ENCODE measurements at regions of chr9 and their contacts with region 1.

Region 1: DNA sequence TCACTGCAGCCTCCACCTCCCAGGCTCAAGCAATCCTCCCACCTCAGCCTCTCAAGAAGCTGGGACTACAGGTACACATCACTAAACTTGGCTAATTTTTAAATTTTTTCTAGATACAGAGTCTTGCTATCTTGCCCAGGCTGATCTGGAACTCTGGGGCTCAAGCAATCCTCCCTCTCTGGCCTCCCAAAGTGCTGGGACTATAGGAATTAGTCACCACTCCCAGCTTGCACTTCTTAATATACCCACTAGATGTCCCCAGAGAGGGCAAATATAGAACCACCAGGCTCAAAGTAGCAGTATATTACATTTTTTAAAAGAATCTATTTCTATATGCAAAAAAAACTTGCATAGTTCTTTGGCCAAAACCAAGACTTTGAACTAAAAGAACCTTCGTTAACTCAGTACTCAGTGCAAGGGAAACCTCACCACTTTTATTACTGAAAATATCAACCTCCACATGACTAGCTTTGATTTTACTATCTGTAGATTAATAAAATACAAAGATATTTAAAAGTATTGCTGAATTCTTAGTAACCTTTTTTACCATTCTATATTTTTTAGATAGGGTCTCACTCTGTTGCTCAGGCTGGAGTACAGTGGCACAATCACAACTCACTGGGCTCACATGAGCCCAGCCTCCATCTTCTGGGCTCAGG is 25.8 kb upstream of the HSD17B3 start:
- DNase-seq: peak in 12 of 14 experiments; percentile 5 to 75 (median 17)
- ATAC-seq: peak; percentile 76
- H3K4me3 ChIP-seq: no peak overlapping the region
- H3K4me3 Mint-ChIP-seq: no peak overlapping the region
- H3K27ac ChIP-seq: no peak overlapping the region
- H3K27ac Mint-ChIP-seq: no peak overlapping the region
- H3K4me1 ChIP-seq: no peaks in the 10 kb centered on the region
- H3K4me1 Mint-ChIP-seq: no peaks in the 10 kb centered on the region
- H3K27me3 ChIP-seq: no peaks in the 10 kb centered on the region
- H3K27me3 Mint-ChIP-seq: no peaks in the 10 kb centered on the region
- CTCF ChIP-seq: peak; percentile 89

Region 2: GRCh38 chr9:96317335-96317980 is 10.4 kb before region 1 on chr9:
- CTCF ChIA-PET with region 1: interaction called, 14 read pairs
- POLR2A ChIA-PET with region 1: no interaction called
- intact Hi-C with region 1: no loop called
- DNase-seq: peak in 13 of 14 experiments; percentile 4 to 72 (median 46)
- ATAC-seq: peak; percentile 58
- H3K4me3 ChIP-seq: no peak overlapping the region
- H3K4me3 Mint-ChIP-seq: no peak overlapping the region
- H3K27ac ChIP-seq: no peak overlapping the region
- H3K27ac Mint-ChIP-seq: no peak overlapping the region
- H3K4me1 ChIP-seq: no peaks in the 10 kb centered on the region
- H3K4me1 Mint-ChIP-seq: no peaks in the 10 kb centered on the region
- H3K27me3 ChIP-seq: no peaks in the 10 kb centered on the region
- H3K27me3 Mint-ChIP-seq: peaks cover 4% of the 10 kb centered on the region
- CTCF ChIP-seq: peak; percentile 84

Region 3: GRCh38 chr9:96449845-96450612 is 122.2 kb after region 1 on chr9 and contains the start of gene HABP4:
- CTCF ChIA-PET with region 1: interaction called, 4 read pairs
- POLR2A ChIA-PET with region 1: interaction called, 5 read pairs
- intact Hi-C with region 1: loop called (anchors 5 to 10 kb)
- DNase-seq: peak; percentile 89 to 98 (median 95)
- ATAC-seq: peak; percentile 90
- H3K4me3 ChIP-seq: peak within 1 kb of the TSS; percentile 89
- H3K4me3 Mint-ChIP-seq: peak within 1 kb of the TSS; percentile 95
- H3K27ac ChIP-seq: peak within 1 kb of the TSS in 1 of 2 donors; percentile 17
- H3K27ac Mint-ChIP-seq: peak within 1 kb of the TSS; percentile 86
- H3K4me1 ChIP-seq: peaks cover 27% of the 10 kb centered on the region
- H3K4me1 Mint-ChIP-seq: peaks cover 27% of the 10 kb centered on the region
- H3K27me3 ChIP-seq: no peaks in the 10 kb centered on the region
- H3K27me3 Mint-ChIP-seq: peaks cover 7% of the 10 kb centered on the region
- CTCF ChIP-seq: no peak
- total RNA-seq, gene HABP4: 29.7 to 31.7 TPM

Region 4: DNA sequence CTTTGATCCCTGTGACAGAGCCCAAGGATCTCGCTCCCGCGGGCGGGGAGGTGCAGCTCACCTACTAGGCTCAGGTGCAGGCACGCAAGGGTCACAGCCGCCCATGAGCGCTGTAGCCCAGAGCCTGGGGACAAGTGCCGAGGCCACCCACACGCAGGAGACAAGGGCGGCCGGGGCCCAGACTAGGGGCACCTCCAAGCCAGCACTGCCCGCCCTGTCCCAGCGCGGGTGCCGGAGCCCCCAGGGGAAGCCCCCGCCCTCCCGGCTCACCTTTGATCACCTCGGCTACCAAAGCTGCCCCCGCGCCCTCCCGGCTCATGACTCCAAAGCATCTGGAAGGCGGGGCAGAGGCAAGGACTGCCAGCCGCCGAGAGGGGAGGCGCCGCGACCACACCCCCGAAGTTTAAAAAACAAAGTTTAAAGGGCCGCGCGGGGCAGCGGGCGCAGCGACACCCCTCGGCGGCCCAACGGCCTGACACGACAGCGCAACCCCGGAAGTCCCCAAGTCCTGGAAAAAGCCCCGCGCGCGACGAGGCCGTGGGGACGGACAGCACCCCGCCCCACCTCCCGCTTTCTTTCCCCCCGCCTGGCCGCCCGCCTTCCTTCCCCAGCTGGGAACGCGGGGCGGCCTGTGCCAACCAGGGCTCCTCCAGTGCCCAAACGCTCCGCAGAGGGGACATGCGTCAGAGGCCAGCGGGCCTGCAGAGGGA is 238.8 kb after region 1 on chr9:
- CTCF ChIA-PET with region 1: interaction called, 3 read pairs
- POLR2A ChIA-PET with region 1: no interaction called
- intact Hi-C with region 1: loop called (anchors 5 kb)
- DNase-seq: peak; percentile 65 to 92 (median 78)
- ATAC-seq: peak; percentile 83
- H3K4me3 ChIP-seq: peak overlapping the region; percentile 85
- H3K4me3 Mint-ChIP-seq: peak overlapping the region; percentile 85
- H3K27ac ChIP-seq: peak overlapping the region; percentile 64 to 73
- H3K27ac Mint-ChIP-seq: peak overlapping the region; percentile 62
- H3K4me1 ChIP-seq: peaks cover 15% of the 10 kb centered on the region
- H3K4me1 Mint-ChIP-seq: peaks cover 31% of the 10 kb centered on the region
- H3K27me3 ChIP-seq: no peaks in the 10 kb centered on the region
- H3K27me3 Mint-ChIP-seq: no peaks in the 10 kb centered on the region
- CTCF ChIP-seq: peak; percentile 82

Region 5: DNA sequence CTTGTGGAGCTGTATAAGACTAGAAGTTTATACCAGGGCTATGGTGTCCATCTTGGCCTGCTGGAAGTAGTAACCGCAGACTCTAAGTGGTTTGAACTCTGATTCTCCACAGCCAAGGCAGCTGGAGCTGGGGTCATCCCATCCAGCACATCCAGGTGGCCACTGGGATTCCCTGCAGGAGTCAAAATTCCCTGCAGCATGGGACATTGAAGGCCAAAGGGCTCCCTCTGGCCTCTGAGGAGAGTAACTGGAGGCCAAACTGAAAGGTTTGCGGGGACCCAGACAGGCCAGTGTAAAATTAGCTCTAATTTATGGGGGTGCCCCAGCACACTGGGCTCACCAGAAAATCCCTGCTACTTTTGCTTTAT is 339.5 kb after region 1 on chr9:
- CTCF ChIA-PET with region 1: interaction called, 11 read pairs
- POLR2A ChIA-PET with region 1: no interaction called
- intact Hi-C with region 1: loop called (anchors 1 to 5 kb)
- DNase-seq: no peak
- ATAC-seq: no peak
- H3K4me3 ChIP-seq: no peak overlapping the region
- H3K4me3 Mint-ChIP-seq: no peak overlapping the region
- H3K27ac ChIP-seq: no peak overlapping the region
- H3K27ac Mint-ChIP-seq: no peak overlapping the region
- H3K4me1 ChIP-seq: no peaks in the 10 kb centered on the region
- H3K4me1 Mint-ChIP-seq: no peaks in the 10 kb centered on the region
- H3K27me3 ChIP-seq: no peaks in the 10 kb centered on the region
- H3K27me3 Mint-ChIP-seq: peaks cover 28% of the 10 kb centered on the region
- CTCF ChIP-seq: no peak